Sigmoid colon (tissue), 7 donors: ENCODE measurements at regions of chr10 and their contacts with region 1.

Region 1: DNA sequence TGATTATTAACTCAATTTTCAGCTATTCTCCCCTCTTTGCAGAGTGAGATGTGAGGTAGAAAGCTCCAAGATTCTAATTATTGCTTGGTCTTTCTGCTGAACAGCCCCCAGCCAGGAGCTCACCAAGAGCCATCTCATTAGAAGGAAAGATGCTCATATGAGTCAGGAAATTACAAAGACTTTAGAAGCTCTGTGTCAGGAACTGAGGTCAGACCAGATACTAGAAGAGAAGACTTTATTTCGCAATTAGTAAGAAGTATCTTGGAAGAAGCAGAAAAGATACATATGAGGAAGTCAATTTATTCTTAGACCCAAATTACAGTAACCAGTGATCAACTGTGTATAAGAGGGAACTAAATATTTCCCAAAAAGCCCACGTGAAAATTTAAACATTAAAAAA is 626.9 kb downstream of the ZWINT start:
- DNase-seq: no peak
- H3K4me3 ChIP-seq: no peak overlapping the region
- H3K27ac ChIP-seq: no peak overlapping the region
- H3K4me1 ChIP-seq: no peaks in the 10 kb centered on the region
- H3K27me3 ChIP-seq: no peaks in the 10 kb centered on the region
- CTCF ChIP-seq: no peak
- EP300 ChIP-seq: no peak
- POLR2A ChIP-seq: no peak

Region 2: DNA sequence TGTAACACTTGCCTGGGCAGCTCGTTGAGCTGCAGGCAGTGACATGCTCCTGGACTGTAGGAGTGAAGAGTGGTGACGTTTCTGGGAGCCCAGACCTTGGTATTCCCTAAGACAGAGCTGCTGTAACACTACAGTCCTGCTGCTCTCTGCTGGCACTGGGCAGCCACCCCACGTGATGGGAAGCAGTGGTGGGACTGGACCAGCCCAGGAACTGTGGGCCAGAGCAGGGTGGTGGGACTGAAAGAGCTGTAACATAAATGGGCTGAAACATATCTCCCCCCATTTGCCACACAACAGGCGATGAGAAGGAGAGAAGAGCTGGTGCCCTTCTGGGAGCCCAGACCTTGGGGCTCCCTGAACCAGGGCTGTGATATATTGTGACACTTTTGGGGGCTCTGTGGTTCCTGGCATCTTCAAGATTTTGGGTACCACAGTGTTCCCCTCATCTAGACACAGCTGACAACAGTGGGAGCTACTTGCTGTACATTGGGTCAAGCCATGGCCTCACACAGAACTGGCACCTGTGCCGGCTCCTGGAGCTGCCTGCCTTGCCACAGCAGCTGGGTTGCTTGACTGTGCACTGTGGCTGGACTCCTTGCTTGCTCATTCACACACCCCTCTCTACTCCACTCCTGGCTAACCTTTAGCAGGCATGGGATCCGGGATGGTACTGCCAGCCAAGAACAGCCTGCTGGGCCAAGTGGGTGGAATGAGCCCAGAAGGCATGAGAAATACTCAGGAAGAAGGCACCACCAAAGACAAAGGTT is 771.8 kb before region 1 on chr10:
- intact Hi-C with region 1: loop called (anchors 10 kb)
- DNase-seq: no peak
- H3K4me3 ChIP-seq: no peak overlapping the region
- H3K27ac ChIP-seq: no peak overlapping the region
- H3K4me1 ChIP-seq: no peaks in the 10 kb centered on the region
- H3K27me3 ChIP-seq: no peaks in the 10 kb centered on the region
- CTCF ChIP-seq: no peak
- EP300 ChIP-seq: no peak
- POLR2A ChIP-seq: no peak

Region 3: DNA sequence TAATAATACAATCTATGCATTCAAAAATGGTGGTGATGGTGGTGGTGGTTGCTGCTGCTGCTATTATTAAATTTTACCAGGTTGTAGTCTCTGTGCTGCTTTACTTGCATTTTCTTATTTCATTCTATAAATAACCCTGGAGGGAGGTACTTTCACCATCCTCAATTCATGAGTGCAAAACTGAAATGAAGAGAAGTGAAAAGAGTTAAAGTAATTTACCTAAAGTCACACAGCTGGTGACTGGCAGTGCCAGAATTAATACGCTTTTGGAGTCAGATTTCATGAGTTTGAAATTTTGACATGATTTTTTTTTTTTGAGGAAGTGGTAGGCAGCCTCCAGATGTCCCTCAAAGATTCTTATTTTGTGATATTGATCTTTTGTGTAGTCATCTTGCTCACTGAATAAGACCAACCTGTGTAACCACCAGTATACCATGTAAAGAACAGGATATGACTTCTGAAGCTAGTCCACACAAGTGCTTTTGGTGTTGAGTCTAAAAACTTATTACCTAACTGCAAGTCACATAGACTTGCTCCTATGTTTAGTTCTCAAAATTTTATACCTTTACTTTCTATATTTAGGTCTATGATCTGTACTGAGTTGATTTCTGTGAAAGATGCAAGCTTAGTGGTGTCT is 408.1 kb after region 1 on chr10:
- intact Hi-C with region 1: no loop called
- DNase-seq: no peak
- H3K4me3 ChIP-seq: no peak overlapping the region
- H3K27ac ChIP-seq: no peak overlapping the region
- H3K4me1 ChIP-seq: no peaks in the 10 kb centered on the region
- H3K27me3 ChIP-seq: no peaks in the 10 kb centered on the region
- CTCF ChIP-seq: no peak
- EP300 ChIP-seq: no peak
- POLR2A ChIP-seq: no peak